Adrenal gland (tissue), 19 donors: ENCODE measurements at regions of chr9 and their contacts with region 1.

Region 1: GRCh38 chr9:37776328-37776727 is 8.5 kb downstream of the EXOSC3 start:
- DNase-seq: no peak
- H3K4me3 ChIP-seq: no peak overlapping the region
- H3K27ac ChIP-seq: no peak overlapping the region
- H3K4me1 ChIP-seq: no peaks in the 10 kb centered on the region
- H3K27me3 ChIP-seq: no peaks in the 10 kb centered on the region
- CTCF ChIP-seq: no peak
- POLR2A ChIP-seq: no peak

Region 2: GRCh38 chr9:37820142-37820541 is 43.8 kb after region 1 on chr9:
- intact Hi-C with region 1: loop called in 1 of 2 experiments (anchors 10 kb)
- DNase-seq: no peak
- H3K4me3 ChIP-seq: no peak overlapping the region
- H3K27ac ChIP-seq: no peak overlapping the region
- H3K4me1 ChIP-seq: peaks cover 0 to 4% of the 10 kb centered on the region in 2 donors
- H3K27me3 ChIP-seq: no peaks in the 10 kb centered on the region
- CTCF ChIP-seq: no peak
- POLR2A ChIP-seq: no peak